ENCODE measurements at regions of chr9 and their contacts with region 1.

Region 1: DNA sequence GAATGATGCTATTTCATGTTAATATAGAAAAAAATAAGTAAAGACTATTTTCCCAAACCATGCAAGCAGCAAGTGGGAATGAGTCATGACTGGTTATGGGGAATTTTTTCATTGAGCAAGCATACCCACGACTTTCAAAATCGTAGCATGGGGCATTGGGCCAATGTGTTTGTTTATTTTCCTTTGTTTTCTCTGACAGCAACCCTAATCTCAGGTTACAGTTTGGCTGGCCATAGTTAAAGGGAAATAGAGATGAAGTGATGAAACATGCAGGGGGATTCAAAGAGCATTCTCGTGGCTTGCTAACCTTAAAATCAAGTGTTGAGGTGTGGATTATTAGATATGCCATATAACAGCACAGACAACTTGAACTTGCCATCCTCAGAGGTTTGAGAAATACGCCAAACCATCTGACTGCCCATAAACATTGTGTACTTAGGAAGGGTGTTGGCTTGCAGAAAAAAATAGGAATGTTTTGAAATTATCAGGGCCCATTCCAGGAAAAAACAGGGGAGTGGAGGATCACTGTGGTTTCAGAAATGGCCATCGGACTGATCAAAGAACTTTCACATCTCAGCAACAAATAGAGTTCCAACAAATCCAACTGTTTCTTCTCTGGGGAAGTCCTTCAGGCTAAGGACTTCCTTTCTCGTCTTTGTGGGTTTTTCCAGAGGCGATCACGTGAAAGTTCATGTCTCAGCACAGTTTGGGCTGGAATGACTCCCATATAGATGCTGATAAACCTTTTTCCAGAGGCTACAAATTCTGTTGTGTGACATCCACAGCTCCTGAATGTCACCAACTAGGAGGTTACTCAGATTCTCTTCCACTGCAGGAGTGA is 259.1 kb downstream of the SYK start:
- DNase-seq: peak; percentile 99
- H3K4me3 Mint-ChIP-seq: peak overlapping the region; percentile 63
- H3K27ac Mint-ChIP-seq: peak overlapping the region; percentile 98
- H3K4me1 Mint-ChIP-seq: peaks cover 45% of the 10 kb centered on the region
- H3K27me3 Mint-ChIP-seq: no peaks in the 10 kb centered on the region
- CTCF ChIP-seq: no peak

Region 2: DNA sequence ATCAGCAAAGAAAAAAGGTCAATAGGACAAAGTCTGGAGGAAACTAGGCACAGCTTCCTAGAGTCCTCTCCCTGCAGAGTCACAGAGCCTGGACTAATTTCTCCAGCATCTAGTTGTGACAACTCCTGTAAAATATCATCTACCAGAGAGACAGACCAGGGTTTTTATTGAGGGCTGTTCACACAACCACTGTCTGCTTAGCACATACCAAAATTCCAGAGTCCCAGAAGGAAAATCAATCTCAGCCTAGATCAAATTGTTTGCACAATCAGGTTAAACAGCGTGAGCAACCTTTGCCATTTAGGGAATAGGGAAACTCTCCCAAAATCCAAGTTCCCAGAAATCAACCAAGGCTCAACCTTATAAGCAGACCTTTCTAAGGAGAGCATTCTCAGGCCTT is 68.8 kb before region 1 on chr9:
- CTCF ChIA-PET with region 1: no interaction called
- POLR2A ChIA-PET with region 1: interaction called, 14 read pairs
- intact Hi-C with region 1: no loop called
- DNase-seq: peak; percentile 39
- H3K4me3 Mint-ChIP-seq: no peak overlapping the region
- H3K27ac Mint-ChIP-seq: peak overlapping the region; percentile 59
- H3K4me1 Mint-ChIP-seq: peaks cover 56% of the 10 kb centered on the region
- H3K27me3 Mint-ChIP-seq: no peaks in the 10 kb centered on the region
- CTCF ChIP-seq: no peak

Region 3: GRCh38 chr9:91001146-91001611 is 59.5 kb before region 1 on chr9:
- CTCF ChIA-PET with region 1: interaction called, 3 read pairs
- POLR2A ChIA-PET with region 1: interaction called, 22 read pairs
- intact Hi-C with region 1: loop called (anchors 2 kb)
- DNase-seq: peak; percentile 99
- H3K4me3 Mint-ChIP-seq: no peak overlapping the region
- H3K27ac Mint-ChIP-seq: peak overlapping the region; percentile 88
- H3K4me1 Mint-ChIP-seq: peaks cover 36% of the 10 kb centered on the region
- H3K27me3 Mint-ChIP-seq: no peaks in the 10 kb centered on the region
- CTCF ChIP-seq: no peak

Region 4: DNA sequence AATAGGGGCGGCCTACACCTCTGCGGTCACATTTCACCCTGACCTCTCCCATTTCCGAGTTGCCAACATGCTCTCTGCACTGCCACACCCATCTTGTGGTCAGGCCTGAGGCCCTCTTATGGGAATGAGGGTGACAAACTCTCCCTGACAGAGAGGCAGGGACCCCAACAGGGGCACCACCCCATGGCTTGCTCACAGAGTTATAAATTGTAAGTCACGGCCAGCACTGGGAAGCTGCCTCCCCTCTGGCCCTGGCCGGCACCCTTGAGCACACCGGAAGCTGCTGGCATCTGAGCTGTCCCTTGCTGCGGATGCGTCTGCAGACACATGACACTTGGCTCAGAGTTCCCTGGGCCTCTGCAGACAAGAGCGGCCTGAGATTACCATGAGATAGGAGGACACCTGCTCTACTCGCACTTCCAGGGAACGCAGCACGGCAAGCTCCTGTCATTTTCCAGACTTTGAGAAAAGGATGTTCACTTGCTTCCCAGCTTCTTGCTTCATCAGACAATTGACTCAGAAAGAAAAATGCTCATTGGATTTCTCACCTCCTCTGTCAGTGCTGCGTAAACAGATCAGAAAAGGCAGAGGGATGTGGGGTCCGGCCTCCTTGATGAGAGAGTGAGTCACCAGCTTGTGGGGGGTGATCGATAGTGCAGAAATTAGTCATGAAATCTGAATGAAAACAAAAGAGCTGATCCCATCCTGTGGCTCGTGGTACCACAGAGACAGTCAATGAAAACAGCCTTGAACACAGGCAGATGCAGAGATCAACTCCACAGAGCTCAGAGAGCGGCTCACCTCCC is 10.7 kb after region 1 on chr9:
- CTCF ChIA-PET with region 1: interaction called, 8 read pairs
- POLR2A ChIA-PET with region 1: interaction called, 21 read pairs
- intact Hi-C with region 1: no loop called
- DNase-seq: peak; percentile 94
- H3K4me3 Mint-ChIP-seq: no peak overlapping the region
- H3K27ac Mint-ChIP-seq: peak overlapping the region; percentile 85
- H3K4me1 Mint-ChIP-seq: peaks cover 21% of the 10 kb centered on the region
- H3K27me3 Mint-ChIP-seq: no peaks in the 10 kb centered on the region
- CTCF ChIP-seq: no peak

Region 5: DNA sequence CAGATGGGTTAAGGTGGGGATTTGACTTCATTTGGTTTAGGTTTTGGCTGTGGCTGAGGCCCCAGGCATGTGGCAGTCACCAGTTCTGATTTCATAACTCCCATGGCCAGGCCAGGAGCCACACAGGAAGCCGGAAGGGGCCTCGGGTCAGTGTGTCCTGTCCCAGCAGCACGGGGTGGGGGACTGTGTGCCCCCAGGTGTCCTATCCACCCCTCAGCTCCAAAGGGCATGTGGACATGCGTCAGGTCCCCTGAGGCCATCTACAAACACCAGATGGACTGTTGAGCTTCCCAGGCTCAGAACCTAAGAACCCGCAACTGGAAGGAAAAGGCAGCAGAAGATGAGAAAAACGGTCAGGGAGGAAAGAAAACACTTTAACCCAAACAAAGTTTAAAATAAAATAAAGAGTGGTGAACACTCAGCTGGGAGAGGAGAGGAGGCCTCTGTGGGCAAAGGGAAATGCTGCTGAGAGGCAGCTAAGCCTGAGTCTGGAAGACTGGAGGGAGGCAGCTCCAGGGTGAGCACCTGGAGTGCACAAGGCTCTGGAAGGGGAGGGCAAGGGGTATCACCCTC is 40.2 kb after region 1 on chr9:
- CTCF ChIA-PET with region 1: no interaction called
- POLR2A ChIA-PET with region 1: interaction called, 17 read pairs
- intact Hi-C with region 1: no loop called
- DNase-seq: peak; percentile 31
- H3K4me3 Mint-ChIP-seq: peak overlapping the region; percentile 38
- H3K27ac Mint-ChIP-seq: peak overlapping the region; percentile 43
- H3K4me1 Mint-ChIP-seq: peaks cover 34% of the 10 kb centered on the region
- H3K27me3 Mint-ChIP-seq: no peaks in the 10 kb centered on the region
- CTCF ChIP-seq: no peak